ENCODE measurements at regions of chr1 and their contacts with region 1.

Region 1: DNA sequence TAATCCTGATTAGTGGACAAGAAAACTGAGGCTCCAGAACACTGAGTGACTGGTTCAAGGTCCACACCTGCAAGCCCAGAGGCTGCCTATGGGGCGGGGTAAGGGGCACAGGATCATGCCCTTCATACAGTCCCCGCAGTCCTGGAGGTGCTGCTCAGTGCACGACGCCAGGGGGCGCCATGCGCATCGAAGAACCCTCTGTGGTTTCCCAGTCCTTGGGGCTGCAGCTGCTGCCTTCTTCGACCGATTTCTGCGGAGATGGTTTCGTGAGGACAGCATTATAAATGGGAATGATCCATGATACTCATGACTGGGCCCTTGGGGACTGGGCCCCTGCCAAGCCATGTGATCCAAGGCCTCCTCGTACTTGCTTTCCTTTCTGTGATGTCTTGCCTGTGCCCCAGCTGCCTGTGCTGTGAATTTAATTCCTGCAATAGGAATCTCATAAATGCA is 37.1 kb upstream of the ARHGEF10L start:
- DNase-seq: peak; percentile 84
- H3K4me3 Mint-ChIP-seq: no peak overlapping the region
- H3K27ac Mint-ChIP-seq: no peak overlapping the region
- H3K4me1 Mint-ChIP-seq: no peaks in the 10 kb centered on the region
- H3K27me3 Mint-ChIP-seq: no peaks in the 10 kb centered on the region
- CTCF ChIP-seq: peak; percentile 81

Region 2: DNA sequence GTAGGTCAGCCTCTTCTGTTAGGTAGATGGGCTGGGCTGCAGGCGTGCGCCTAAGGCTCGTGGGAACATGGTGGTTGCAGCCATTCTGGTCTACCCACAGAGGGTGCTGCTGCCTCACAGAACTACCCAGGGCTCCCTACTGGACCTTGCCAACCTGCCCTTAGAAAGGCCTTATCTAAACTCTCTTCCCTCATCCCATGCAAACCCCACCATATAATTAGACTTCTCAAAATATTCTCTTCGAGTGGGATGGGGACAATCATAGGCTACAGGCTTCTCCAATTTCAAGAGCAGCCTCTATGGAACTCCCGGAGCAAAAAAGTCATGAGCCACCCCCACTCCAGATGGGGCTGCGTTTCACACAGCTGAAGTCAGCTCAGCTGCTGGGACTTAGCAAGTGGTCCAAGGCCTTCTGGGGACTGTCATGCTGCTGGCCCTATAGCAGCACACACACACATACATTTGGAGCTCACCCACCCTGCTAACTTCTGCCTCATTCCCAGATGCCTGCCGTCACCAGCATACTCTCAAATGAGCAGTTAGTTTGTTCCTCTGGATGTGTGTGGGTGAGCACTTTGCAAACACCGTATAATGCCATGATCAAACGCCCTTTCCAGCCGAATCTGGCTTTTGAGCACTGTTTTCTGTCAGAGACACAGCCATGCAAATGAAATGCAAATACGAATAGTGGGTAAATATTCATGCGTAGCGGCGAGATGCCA is 442.5 kb before region 1 on chr1:
- CTCF ChIA-PET with region 1: no interaction called
- intact Hi-C with region 1: no loop called
- DNase-seq: peak; percentile 74
- H3K4me3 Mint-ChIP-seq: no peak overlapping the region
- H3K27ac Mint-ChIP-seq: no peak overlapping the region
- H3K4me1 Mint-ChIP-seq: no peaks in the 10 kb centered on the region
- H3K27me3 Mint-ChIP-seq: peaks cover 15% of the 10 kb centered on the region
- CTCF ChIP-seq: peak; percentile 55

Region 3: DNA sequence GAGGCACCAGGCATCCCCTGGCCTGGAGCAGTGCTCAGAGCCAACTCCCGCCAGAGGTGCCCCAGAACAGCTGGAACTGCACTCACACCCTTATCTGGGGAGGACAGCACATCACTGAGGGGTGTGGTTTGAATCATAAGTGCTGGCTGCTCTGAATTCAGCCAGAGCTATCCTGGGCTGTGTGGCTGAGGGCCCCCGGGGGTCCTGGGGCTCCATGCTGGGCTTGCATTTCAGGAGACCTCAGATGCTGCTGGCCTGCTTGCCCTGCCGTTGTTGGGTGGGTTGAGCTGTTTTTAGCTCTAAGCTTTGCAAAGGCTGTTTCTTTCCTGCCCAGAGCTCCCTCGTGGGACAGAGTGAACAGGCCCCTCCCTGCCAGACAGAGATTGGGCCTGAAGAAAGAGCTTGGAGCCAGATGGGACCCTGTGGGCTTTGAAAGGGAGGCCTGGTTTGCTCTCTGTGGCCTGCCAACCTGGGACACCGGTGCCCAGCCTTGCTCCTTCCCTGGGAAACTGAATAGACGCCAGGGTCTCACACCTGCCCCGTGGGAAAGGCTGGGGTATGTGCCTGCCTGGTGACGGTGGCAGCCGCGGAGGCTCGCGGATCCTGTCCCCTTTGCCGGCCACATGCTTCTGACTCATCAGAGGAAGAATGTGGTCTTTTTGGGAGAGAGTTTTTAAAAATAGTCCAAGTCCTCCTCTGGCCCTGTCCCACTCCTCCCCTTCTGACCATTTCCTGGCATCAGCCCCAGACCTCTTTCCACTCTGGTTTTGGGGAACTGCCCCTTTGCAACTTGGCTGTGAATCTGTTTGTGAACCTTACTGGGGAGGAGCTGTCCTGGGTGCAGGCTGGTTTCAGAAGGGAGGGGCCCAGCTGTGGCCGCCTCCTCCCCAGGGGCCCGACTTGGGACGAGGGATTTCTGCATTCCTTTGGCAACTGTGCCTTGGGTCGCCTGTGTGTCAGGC is 67.1 kb after region 1 on chr1:
- CTCF ChIA-PET with region 1: no interaction called
- intact Hi-C with region 1: loop called (anchors 10 kb)
- DNase-seq: peak; percentile 62
- H3K4me3 Mint-ChIP-seq: peak overlapping the region; percentile 40
- H3K27ac Mint-ChIP-seq: peak overlapping the region; percentile 81
- H3K4me1 Mint-ChIP-seq: peaks cover 34% of the 10 kb centered on the region
- H3K27me3 Mint-ChIP-seq: no peaks in the 10 kb centered on the region
- CTCF ChIP-seq: no peak

Region 4: GRCh38 chr1:17606826-17607440 is 104.6 kb after region 1 on chr1:
- CTCF ChIA-PET with region 1: interaction called, 40 read pairs
- intact Hi-C with region 1: loop called (anchors 1 kb)
- DNase-seq: peak; percentile 69
- H3K4me3 Mint-ChIP-seq: no peak overlapping the region
- H3K27ac Mint-ChIP-seq: no peak overlapping the region
- H3K4me1 Mint-ChIP-seq: peaks cover 7% of the 10 kb centered on the region
- H3K27me3 Mint-ChIP-seq: no peaks in the 10 kb centered on the region
- CTCF ChIP-seq: peak; percentile 74

Measured in Calu3 (cell line).